Naive thymus-derived CD4-positive, alpha-beta T cell (primary cell): ENCODE measurements at regions of chr17 and their contacts with region 1.

Region 1: DNA sequence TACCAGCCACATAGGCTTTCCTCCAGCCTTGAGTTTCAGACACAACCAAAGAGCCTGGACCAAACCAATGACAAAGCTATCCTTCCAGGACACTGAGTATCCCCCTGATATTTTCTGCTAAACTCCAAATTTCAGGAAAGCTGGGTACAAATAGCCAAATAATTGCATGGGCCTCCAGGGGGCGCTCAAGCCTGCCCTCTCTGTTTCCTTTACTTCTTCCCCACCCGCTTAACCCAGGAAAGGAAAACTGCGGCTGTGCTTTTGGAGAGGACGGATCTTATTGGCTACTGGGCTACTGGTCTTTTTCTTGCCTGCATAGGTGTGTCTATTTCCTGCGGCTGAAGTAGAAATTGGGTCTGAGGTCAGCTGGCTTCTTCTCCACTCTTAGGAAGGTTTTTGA is 30.1 kb downstream of the GNGT2 start:
- DNase-seq: peak; percentile 38 to 67 (median 58)
- ATAC-seq: peak; percentile 69
- H3K4me3 ChIP-seq: no peak overlapping the region
- H3K4me3 Mint-ChIP-seq: peak overlapping the region in 3 of 10 donors; percentile 16 to 42 (median 21)
- H3K27ac ChIP-seq: no peak overlapping the region
- H3K27ac Mint-ChIP-seq: peak overlapping the region in 1 of 9 donors; percentile 41
- H3K4me1 ChIP-seq: peaks cover 4% of the 10 kb centered on the region in 2 donors
- H3K4me1 Mint-ChIP-seq: peaks cover 0 to 5% (median 4%) of the 10 kb centered on the region in 7 donors
- H3K27me3 ChIP-seq: peaks cover 0 to 4% of the 10 kb centered on the region in 2 donors
- H3K27me3 Mint-ChIP-seq: peaks cover 0 to 8% (median 2%) of the 10 kb centered on the region in 5 donors

Region 2: DNA sequence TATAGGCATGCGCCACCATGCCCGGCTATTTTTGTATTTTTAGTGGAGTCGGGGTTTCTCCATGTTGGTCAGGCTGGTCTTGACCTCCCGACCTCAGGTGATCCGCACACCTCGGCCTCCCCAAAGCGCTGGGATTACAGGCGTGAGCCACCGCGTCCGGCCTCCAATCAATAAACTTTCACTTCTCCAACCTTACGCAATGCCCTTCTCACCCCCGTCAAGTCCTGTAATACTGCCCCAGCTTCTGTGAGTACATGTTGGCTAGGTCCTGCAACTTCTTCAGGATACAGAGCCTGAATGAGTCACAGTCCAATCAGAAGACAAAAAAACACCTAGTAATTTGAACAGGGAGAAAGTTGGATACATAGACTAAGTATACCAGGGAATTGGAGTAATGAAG is 97.3 kb after region 1 on chr17:
- CTCF ChIA-PET with region 1: interaction called, 4 read pairs
- POLR2A ChIA-PET with region 1: no interaction called
- intact Hi-C with region 1: loop called in 1 of 2 experiments (anchors 1 kb)
- DNase-seq: no peak
- ATAC-seq: no peak
- H3K4me3 ChIP-seq: no peak overlapping the region
- H3K4me3 Mint-ChIP-seq: no peak overlapping the region
- H3K27ac ChIP-seq: no peak overlapping the region
- H3K27ac Mint-ChIP-seq: no peak overlapping the region
- H3K4me1 ChIP-seq: no peaks in the 10 kb centered on the region
- H3K4me1 Mint-ChIP-seq: no peaks in the 10 kb centered on the region
- H3K27me3 ChIP-seq: no peaks in the 10 kb centered on the region
- H3K27me3 Mint-ChIP-seq: peaks cover 0 to 8% (median 0%) of the 10 kb centered on the region in 5 donors

Region 3: DNA sequence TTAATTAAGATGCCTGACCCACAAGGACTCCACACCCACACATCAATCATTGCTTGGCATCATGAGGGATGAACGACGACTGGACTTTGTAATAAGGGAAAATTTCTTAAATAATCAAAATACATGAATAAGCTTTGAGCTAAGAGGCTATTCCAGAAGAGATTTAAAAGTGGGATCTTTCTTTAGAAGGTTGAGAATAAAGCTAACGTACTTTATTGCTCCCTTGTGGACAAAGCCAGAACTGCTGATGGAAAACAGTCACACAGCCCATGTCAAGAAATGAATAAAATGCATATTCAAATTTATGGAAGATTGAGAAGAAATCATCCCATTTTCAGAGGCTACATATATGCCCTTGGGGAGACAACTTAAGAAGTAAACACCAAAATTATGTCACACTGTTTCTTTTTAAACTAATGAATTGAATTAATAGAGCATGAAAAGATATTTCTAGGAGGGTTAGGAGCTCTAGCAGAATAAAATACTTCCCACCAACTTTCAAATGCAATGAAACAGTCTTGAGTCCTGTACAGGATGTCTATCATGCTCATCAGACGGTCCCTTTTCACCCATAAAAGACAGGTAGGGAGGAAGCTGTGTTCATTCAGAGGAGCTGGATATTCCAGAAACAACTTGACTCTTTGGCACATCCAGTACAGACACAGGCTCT is 110.5 kb after region 1 on chr17:
- CTCF ChIA-PET with region 1: interaction called, 9 read pairs
- POLR2A ChIA-PET with region 1: interaction called, 3 read pairs
- intact Hi-C with region 1: loop called (anchors 1 kb)
- DNase-seq: peak in 5 of 9 donors; percentile 2 to 13 (median 11)
- ATAC-seq: no peak
- H3K4me3 ChIP-seq: no peak overlapping the region
- H3K4me3 Mint-ChIP-seq: no peak overlapping the region
- H3K27ac ChIP-seq: no peak overlapping the region
- H3K27ac Mint-ChIP-seq: peak overlapping the region in 2 of 9 donors; percentile 11 to 23
- H3K4me1 ChIP-seq: no peaks in the 10 kb centered on the region
- H3K4me1 Mint-ChIP-seq: no peaks in the 10 kb centered on the region
- H3K27me3 ChIP-seq: no peaks in the 10 kb centered on the region
- H3K27me3 Mint-ChIP-seq: no peaks in the 10 kb centered on the region

Region 4: GRCh38 chr17:49390548-49391324 is 210.4 kb after region 1 on chr17:
- CTCF ChIA-PET with region 1: interaction called, 3 read pairs
- POLR2A ChIA-PET with region 1: no interaction called
- intact Hi-C with region 1: loop called in 1 of 2 experiments (anchors 1 kb)
- DNase-seq: no peak
- ATAC-seq: peak; percentile 48
- H3K4me3 ChIP-seq: peak overlapping the region; percentile 29
- H3K4me3 Mint-ChIP-seq: peak overlapping the region; percentile 21 to 83 (median 58)
- H3K27ac ChIP-seq: no peak overlapping the region
- H3K27ac Mint-ChIP-seq: peak overlapping the region; percentile 44 to 93 (median 71)
- H3K4me1 ChIP-seq: peaks cover 43 to 51% of the 10 kb centered on the region in 2 donors
- H3K4me1 Mint-ChIP-seq: peaks cover 48 to 70% (median 63%) of the 10 kb centered on the region in 7 donors
- H3K27me3 ChIP-seq: no peaks in the 10 kb centered on the region
- H3K27me3 Mint-ChIP-seq: no peaks in the 10 kb centered on the region

Region 5: GRCh38 chr17:49407981-49408501 is 227.7 kb after region 1 on chr17:
- CTCF ChIA-PET with region 1: no interaction called
- POLR2A ChIA-PET with region 1: no interaction called
- intact Hi-C with region 1: no loop called
- DNase-seq: peak; percentile 67 to 85 (median 81)
- ATAC-seq: peak; percentile 98
- H3K4me3 ChIP-seq: no peak overlapping the region
- H3K4me3 Mint-ChIP-seq: no peak overlapping the region
- H3K27ac ChIP-seq: no peak overlapping the region
- H3K27ac Mint-ChIP-seq: peak overlapping the region in 4 of 9 donors; percentile 12 to 66 (median 50)
- H3K4me1 ChIP-seq: peaks cover 0 to 20% of the 10 kb centered on the region in 2 donors
- H3K4me1 Mint-ChIP-seq: peaks cover 17 to 36% (median 31%) of the 10 kb centered on the region in 7 donors
- H3K27me3 ChIP-seq: no peaks in the 10 kb centered on the region
- H3K27me3 Mint-ChIP-seq: no peaks in the 10 kb centered on the region